ENCODE measurements at regions of chr2 and their contacts with region 1.

Region 1: DNA sequence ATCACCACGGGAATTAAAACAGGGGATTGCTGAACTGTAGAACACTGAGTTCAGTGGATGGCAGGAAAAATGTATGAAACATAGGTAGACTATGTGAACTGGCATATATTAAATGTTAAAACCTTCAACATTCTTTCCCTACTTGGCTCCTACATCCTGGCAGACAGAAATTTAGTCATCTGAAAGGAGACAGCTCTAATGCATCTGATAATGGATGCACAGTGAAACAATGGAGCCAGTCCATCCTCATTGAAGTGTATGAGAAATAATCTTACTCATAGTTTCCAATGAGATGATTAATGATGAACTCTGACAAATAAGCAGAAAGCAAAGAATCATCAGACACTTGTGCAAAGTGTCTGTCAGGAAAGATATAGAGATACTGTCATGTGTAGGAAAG is 1629.7 kb upstream of the TMEFF2 start:
- DNase-seq: no peak
- ATAC-seq: no peak
- H3K4me3 ChIP-seq: no peak overlapping the region
- H3K4me3 Mint-ChIP-seq: no peak overlapping the region
- H3K27ac ChIP-seq: no peak overlapping the region
- H3K27ac Mint-ChIP-seq: no peak overlapping the region
- H3K4me1 ChIP-seq: no peaks in the 10 kb centered on the region
- H3K4me1 Mint-ChIP-seq: no peaks in the 10 kb centered on the region
- H3K27me3 ChIP-seq: no peaks in the 10 kb centered on the region
- H3K27me3 Mint-ChIP-seq: no peaks in the 10 kb centered on the region
- CTCF ChIP-seq: no peak

Region 2: DNA sequence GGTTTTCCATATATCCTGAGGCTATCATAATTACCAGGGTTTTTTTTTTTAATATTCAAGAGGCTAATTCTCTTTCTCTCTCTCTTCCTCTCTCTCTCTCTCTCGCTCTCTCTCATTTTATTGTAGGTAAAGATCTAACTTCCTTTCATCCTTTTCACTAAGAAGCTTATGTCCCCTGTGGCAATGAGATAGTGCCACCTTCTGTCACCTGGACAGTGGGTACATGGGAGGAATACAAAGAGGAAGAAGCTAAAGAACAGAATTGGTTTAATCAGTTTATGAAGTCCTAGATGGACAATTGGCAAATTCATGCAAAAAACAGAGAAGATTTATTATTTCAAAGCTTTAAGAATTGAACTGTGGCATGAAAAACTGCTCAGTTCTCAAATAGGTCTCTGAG is 47.5 kb before region 1 on chr2:
- CTCF ChIA-PET with region 1: no interaction called
- POLR2A ChIA-PET with region 1: no interaction called
- intact Hi-C with region 1: no loop called
- DNase-seq: no peak
- ATAC-seq: no peak
- H3K4me3 ChIP-seq: no peak overlapping the region
- H3K4me3 Mint-ChIP-seq: no peak overlapping the region
- H3K27ac ChIP-seq: no peak overlapping the region
- H3K27ac Mint-ChIP-seq: no peak overlapping the region
- H3K4me1 ChIP-seq: no peaks in the 10 kb centered on the region
- H3K4me1 Mint-ChIP-seq: no peaks in the 10 kb centered on the region
- H3K27me3 ChIP-seq: no peaks in the 10 kb centered on the region
- H3K27me3 Mint-ChIP-seq: no peaks in the 10 kb centered on the region
- CTCF ChIP-seq: no peak

Region 3: DNA sequence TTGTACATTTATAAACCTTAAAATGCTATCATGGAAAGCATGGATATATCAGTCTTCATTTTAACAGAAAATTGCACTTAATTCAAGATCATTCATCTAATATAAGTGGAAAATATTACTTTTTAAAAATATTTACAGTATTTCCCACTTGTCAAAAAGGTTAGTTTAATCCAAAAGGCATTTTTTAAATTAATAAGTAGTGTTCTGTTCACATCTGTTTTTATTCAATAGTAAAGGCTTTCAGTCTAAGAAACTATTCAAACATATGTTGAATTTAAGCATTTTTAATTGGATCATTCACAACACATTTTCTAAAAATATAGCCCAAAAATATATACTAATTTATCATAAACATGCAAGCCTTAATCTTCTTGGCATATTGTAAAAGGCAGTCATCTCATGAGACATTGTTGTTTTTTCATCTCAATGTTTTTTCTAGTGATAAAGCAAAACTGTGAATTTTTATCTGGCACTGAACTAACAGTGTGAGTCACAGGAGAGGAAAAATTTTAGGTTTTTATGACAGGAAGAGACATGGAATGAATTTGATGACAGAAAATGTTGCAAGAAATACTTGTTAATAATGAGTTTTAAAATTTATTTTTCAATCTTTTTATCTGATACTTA is 12.8 kb after region 1 on chr2:
- CTCF ChIA-PET with region 1: no interaction called
- POLR2A ChIA-PET with region 1: no interaction called
- intact Hi-C with region 1: loop called (anchors 1 kb)
- DNase-seq: no peak
- ATAC-seq: no peak
- H3K4me3 ChIP-seq: no peak overlapping the region
- H3K4me3 Mint-ChIP-seq: no peak overlapping the region
- H3K27ac ChIP-seq: no peak overlapping the region
- H3K27ac Mint-ChIP-seq: no peak overlapping the region
- H3K4me1 ChIP-seq: no peaks in the 10 kb centered on the region
- H3K4me1 Mint-ChIP-seq: no peaks in the 10 kb centered on the region
- H3K27me3 ChIP-seq: no peaks in the 10 kb centered on the region
- H3K27me3 Mint-ChIP-seq: no peaks in the 10 kb centered on the region
- CTCF ChIP-seq: no peak

Measured in B cell (primary cell).